Endothelial cell of umbilical vein (primary cell): ENCODE measurements at regions of chr1 and their contacts with region 1.

Region 1: DNA sequence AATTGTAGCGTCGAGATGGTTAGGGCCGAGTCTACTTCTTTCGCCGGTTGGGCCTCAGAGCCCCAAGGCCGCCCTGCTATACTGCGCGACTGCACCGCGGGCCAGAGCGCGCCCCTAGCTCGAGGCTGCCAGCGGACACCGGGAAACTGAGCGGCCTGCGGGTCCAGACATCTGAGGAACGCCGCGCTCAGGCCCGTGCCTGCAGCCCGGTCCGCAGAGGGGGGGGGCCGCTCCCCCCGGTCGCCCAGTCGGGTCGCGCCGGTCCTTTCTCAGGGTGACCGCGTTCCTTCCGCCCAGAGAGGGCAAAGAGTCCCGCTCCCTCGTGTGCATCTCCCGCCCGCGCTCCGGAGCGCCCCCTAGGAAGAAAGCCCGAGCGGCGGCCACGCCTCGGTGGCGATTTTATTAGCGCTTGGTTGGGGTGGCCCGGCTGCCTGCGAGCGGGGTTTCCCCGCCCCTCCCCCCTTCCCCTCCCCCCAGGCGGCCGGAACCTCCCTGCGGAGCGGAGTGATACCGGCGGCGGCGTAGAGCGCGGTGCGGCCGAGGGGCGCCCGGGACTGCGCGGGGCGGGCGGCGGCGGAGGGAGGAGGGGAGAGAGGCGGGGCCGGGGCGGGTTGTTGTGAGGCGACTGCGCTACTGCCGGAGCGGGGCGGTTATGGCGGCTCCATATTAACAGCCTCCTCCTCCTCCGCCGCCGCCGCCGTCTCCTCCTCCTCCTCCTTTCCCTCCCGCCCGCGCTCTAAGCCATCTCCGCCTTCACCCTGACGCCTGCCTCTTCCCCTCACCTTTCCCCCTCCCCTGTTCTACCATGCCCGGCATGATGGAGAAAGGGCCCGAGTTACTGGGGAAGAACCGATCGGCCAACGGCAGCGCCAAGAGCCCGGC is at the start of gene RCOR3:
- DNase-seq: peak; percentile 80
- H3K4me3 ChIP-seq: peak within 1 kb of the TSS; percentile 84 to 95 (median 86)
- H3K27ac ChIP-seq: peak within 1 kb of the TSS; percentile 85
- H3K4me1 ChIP-seq: peaks cover 13% of the 10 kb centered on the region
- H3K27me3 ChIP-seq: no peaks in the 10 kb centered on the region
- CTCF ChIP-seq: peak; percentile 50 to 74
- POLR2A ChIP-seq: peak; percentile 14
- total RNA-seq, gene RCOR3: 34.0 and 35.7 TPM in 2 replicates

Region 2: DNA sequence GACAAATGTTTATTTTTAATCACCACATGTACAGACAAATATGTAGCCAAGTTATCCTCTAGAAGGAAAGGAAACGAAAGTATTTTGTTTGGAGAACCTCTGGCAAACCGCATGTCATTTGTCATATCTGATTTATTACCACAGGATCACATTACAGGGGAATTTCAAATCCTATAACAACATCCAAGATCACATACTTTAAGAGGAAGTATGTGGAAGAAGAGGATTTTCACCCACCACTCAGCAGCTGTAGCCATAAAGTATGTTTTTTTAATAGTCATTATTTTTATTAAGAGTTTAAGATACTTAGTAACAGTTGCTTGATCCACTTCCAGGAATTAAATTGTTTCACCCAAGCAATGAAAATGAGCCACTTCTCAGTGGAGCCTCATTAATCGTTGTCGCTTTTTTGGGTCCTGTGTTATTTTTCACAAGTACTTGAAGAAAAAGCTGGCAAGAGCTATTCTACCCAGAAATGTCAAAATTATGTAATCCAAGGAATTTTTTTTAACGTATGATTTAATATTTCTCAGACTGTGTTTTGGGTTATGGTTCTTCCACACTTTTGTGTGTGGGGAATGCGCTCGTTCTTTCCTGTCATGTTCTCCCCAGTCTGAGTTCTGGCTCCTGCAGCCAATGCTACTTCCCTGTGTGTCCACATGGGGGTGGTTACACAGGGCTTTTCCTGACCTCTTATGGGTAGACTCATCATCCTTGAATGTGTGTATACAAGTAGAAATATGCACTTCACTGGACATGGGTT is 1019.5 kb before region 1 on chr1:
- CTCF ChIA-PET with region 1: no interaction called
- POLR2A ChIA-PET with region 1: no interaction called
- dilution Hi-C with region 1: no loop called
- intact Hi-C with region 1: loop called (anchors 2 kb)
- DNase-seq: peak; percentile 92
- H3K4me3 ChIP-seq: peak overlapping the region in 1 of 3 experiments; percentile 28
- H3K27ac ChIP-seq: peak overlapping the region; percentile 85
- H3K4me1 ChIP-seq: peaks cover 48% of the 10 kb centered on the region
- H3K27me3 ChIP-seq: no peaks in the 10 kb centered on the region
- CTCF ChIP-seq: peak; percentile 62 to 63
- POLR2A ChIP-seq: peak; percentile 20

Region 3: DNA sequence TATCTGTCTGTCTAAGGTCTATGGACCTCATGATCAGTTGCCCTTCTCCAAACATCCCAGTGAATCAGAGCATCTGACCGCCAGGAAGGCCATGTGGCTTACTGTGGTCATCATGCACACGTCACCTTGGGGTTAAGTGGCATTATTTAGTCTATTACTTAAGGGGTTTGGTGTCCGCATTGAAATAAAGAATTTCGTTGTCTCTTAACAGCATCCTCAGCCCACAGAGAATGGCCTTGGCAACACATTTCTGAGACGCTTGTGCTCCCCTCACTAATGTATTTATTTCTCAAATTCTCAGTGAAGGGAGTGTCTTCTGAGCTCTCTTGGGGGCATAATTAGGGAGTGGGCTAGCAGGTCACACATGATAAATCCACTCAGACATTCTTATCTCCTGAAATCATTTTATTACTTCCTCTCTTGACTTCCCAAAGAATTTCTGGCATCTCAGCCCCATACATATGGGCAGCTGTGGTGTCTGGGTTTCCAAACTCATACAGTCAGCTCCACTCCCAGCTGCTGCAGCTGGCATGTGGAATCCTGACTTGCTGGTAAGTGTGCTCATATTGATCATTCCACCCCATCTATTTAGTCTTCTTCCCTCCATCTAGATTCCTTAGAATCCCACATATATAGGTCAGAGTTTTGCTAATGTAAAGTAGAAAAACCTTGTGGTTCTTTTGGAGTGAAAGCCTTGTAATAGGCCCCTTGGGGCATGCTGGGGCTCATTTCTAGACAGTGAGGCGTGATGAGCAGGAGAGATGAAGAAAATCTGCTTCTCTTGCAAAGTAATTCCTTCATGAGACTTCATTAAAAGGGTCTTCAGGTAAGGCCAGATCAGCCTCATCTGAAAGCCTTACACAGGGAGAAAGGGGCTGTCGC is 819.8 kb before region 1 on chr1:
- CTCF ChIA-PET with region 1: no interaction called
- POLR2A ChIA-PET with region 1: no interaction called
- dilution Hi-C with region 1: no loop called
- intact Hi-C with region 1: loop called (anchors 1 kb)
- DNase-seq: peak; percentile 34
- H3K4me3 ChIP-seq: no peak overlapping the region
- H3K27ac ChIP-seq: peak overlapping the region; percentile 67
- H3K4me1 ChIP-seq: peaks cover 14% of the 10 kb centered on the region
- H3K27me3 ChIP-seq: no peaks in the 10 kb centered on the region
- CTCF ChIP-seq: no peak
- POLR2A ChIP-seq: no peak

Region 4: GRCh38 chr1:211133836-211134669 is 124.9 kb before region 1 on chr1 and contains the start of gene KCNH1:
- CTCF ChIA-PET with region 1: interaction called, 9 read pairs
- POLR2A ChIA-PET with region 1: no interaction called
- dilution Hi-C with region 1: no loop called
- intact Hi-C with region 1: loop called (anchors 1 kb)
- DNase-seq: peak; percentile 77
- H3K4me3 ChIP-seq: peak within 1 kb of the TSS in 1 of 3 experiments; percentile 17
- H3K27ac ChIP-seq: no peak within 1 kb of the TSS
- H3K4me1 ChIP-seq: peaks cover 2% of the 10 kb centered on the region
- H3K27me3 ChIP-seq: peaks cover 11 to 31% of the 10 kb centered on the region in 2 experiments
- CTCF ChIP-seq: peak; percentile 84 to 96
- POLR2A ChIP-seq: no peak
- total RNA-seq, gene KCNH1: not detected in 2 replicates

Region 5: DNA sequence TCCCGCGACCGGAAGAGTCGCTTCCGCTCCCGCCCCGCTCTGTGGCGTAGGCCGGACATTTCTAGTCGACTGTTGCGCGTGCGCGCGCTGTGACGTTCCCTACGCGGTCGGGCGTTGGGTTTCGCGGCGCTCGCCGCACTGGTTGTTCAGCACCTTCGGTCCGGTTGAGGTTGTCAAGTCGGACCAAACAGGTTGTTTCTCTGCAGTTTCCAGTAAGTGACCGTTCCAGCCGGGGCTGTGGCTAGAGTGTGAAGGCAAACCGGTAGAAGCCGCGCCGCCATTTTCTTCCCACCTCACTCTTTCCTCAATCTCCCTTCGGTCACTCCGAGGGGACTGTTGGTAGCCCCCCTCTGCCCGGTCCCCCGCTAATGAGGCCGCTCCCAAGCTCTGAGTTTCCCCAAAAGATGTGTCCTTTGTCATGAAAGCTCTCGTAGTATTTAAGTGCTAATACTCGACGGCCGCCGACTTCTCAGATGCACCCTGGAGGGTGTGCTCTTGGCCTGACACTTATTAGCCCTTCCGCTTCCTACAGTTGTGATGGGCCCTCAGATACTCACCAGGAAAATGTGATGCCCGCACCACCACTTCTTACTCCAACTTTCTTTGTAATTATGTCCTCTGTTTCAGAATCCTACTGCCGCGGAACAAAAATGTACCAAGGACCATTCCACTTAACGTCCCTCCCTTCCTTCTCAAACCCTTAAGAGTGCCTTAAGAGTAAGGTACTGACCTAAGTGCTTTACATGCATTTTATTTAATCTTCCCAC is 123.9 kb after region 1 on chr1:
- CTCF ChIA-PET with region 1: no interaction called
- POLR2A ChIA-PET with region 1: no interaction called
- dilution Hi-C with region 1: no loop called
- intact Hi-C with region 1: loop called (anchors 1 kb)
- DNase-seq: peak; percentile 94
- H3K4me3 ChIP-seq: peak overlapping the region; percentile 50 to 77 (median 56)
- H3K27ac ChIP-seq: peak overlapping the region; percentile 96
- H3K4me1 ChIP-seq: peaks cover 11% of the 10 kb centered on the region
- H3K27me3 ChIP-seq: no peaks in the 10 kb centered on the region
- CTCF ChIP-seq: no peak
- POLR2A ChIP-seq: peak; percentile 98

Region 6: DNA sequence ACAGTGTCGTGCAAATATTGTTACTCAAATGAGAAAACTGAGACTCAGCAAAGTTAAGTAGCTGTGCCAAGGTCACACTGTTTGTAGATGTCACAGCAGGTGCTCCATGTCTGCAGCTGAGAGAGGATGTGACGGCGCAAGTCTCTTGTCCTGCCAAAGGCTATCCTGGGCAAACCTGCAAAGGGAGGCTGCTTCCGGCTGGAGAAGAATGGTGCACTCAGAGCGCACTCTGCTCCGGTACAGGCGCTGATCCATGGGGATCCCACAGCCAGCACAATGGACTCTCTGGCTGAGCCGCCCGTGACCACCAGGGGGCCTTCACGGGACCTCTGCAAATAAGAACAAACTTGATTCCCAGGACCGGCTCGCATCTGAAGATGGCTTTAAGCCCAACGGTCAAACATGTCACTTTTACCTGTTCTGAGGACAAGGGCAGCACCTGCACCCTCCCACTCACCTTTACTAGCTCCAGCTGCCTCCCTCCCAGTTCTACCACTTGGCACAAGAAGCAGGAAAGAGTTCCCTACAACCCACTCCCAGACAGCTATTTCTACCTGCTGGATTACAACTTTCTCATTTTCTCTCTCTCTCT is 211.0 kb after region 1 on chr1:
- CTCF ChIA-PET with region 1: interaction called, 6 read pairs
- POLR2A ChIA-PET with region 1: no interaction called
- dilution Hi-C with region 1: no loop called
- intact Hi-C with region 1: loop called (anchors 2 kb)
- DNase-seq: peak; percentile 80
- H3K4me3 ChIP-seq: no peak overlapping the region
- H3K27ac ChIP-seq: no peak overlapping the region
- H3K4me1 ChIP-seq: peaks cover 20% of the 10 kb centered on the region
- H3K27me3 ChIP-seq: peaks cover 0 to 7% of the 10 kb centered on the region in 2 experiments
- CTCF ChIP-seq: peak; percentile 92 to 96
- POLR2A ChIP-seq: no peak

Region 7: GRCh38 chr1:211639500-211640300 is 380.7 kb after region 1 on chr1:
- CTCF ChIA-PET with region 1: no interaction called
- POLR2A ChIA-PET with region 1: no interaction called
- dilution Hi-C with region 1: no loop called
- intact Hi-C with region 1: loop called (anchors 2 kb)
- DNase-seq: peak; percentile 96
- H3K4me3 ChIP-seq: peak overlapping the region in 2 of 3 experiments; percentile 31 to 37
- H3K27ac ChIP-seq: peak overlapping the region; percentile 95
- H3K4me1 ChIP-seq: peaks cover 27% of the 10 kb centered on the region
- H3K27me3 ChIP-seq: no peaks in the 10 kb centered on the region
- CTCF ChIP-seq: no peak
- POLR2A ChIP-seq: no peak